ENCODE measurements at regions of chr3 and their contacts with region 1.

Region 1: GRCh38 chr3:33440323-33441232 is at the start of gene UBP1:
- DNase-seq: peak; percentile 100
- H3K4me3 ChIP-seq: peak within 1 kb of the TSS; percentile 82 to 95 (median 94)
- H3K4me3 Mint-ChIP-seq: peak within 1 kb of the TSS; percentile 99 to 100
- H3K27ac ChIP-seq: peak within 1 kb of the TSS; percentile 97 to 98
- H3K27ac Mint-ChIP-seq: peak within 1 kb of the TSS; percentile 97 to 100 (median 100)
- H3K4me1 ChIP-seq: peaks cover 34 to 41% of the 10 kb centered on the region in 2 donors
- H3K4me1 Mint-ChIP-seq: peaks cover 37% of the 10 kb centered on the region
- H3K27me3 ChIP-seq: no peaks in the 10 kb centered on the region
- H3K27me3 Mint-ChIP-seq: peaks cover 0 to 5% (median 0%) of the 10 kb centered on the region in 3 donors
- CTCF ChIP-seq: no peak
- polyA plus RNA-seq, gene UBP1: 7.8 to 72.4 (median 8.8) TPM

Region 2: DNA sequence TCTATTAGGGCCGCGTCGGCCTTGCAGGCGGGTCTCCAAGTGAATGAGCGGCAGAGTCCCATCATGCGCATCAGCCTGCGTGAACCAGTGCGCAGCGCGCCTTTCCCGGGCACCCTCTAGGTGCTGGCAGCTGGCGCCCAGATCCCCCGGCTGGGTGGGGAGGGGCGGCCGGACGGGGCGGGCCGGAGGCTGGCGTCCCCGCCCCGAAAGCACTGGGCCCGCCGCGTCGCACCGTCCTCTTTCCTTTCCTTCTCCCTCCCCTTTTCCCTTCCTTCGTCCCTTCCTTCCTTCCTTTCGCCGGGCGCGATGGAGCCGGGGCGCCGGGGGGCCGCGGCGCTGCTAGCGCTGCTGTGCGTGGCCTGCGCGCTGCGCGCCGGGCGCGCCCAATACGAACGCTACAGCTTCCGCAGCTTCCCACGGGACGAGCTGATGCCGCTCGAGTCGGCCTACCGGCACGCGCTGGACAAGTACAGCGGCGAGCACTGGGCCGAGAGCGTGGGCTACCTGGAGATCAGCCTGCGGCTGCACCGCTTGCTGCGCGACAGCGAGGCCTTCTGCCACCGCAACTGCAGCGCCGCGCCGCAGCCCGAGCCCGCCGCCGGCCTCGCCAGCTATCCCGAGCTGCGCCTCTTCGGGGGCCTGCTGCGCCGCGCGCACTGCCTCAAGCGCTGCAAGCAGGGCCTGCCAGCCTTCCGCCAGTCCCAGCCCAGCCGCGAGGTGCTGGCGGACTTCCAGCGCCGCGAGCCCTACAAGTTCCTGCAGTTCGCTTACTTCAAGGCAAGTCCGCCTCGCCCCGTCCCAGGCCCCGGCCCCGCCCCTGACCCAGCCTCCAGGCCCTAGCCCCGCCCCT is 326.6 kb before region 1 on chr3 and contains the start of gene CRTAP:
- intact Hi-C with region 1: loop called in 1 of 2 experiments (anchors 10 kb)
- DNase-seq: peak; percentile 85 to 90 (median 90)
- H3K4me3 ChIP-seq: peak within 1 kb of the TSS; percentile 60 to 89 (median 84)
- H3K4me3 Mint-ChIP-seq: peak within 1 kb of the TSS; percentile 80 to 90
- H3K27ac ChIP-seq: peak within 1 kb of the TSS; percentile 86 to 91
- H3K27ac Mint-ChIP-seq: peak within 1 kb of the TSS; percentile 88 to 98 (median 94)
- H3K4me1 ChIP-seq: peaks cover 54 to 69% of the 10 kb centered on the region in 2 donors
- H3K4me1 Mint-ChIP-seq: peaks cover 69% of the 10 kb centered on the region
- H3K27me3 ChIP-seq: no peaks in the 10 kb centered on the region
- H3K27me3 Mint-ChIP-seq: peaks cover 0 to 2% (median 0%) of the 10 kb centered on the region in 3 donors
- CTCF ChIP-seq: no peak
- polyA plus RNA-seq, gene CRTAP: 134 to 321 (median 317) TPM

Region 3: GRCh38 chr3:33401781-33402180 is 38.8 kb before region 1 on chr3:
- intact Hi-C with region 1: loop called in 1 of 2 experiments (anchors 5 kb)
- DNase-seq: no peak
- H3K4me3 ChIP-seq: no peak overlapping the region
- H3K4me3 Mint-ChIP-seq: no peak overlapping the region
- H3K27ac ChIP-seq: peak overlapping the region in 1 of 2 donors; percentile 66
- H3K27ac Mint-ChIP-seq: peak overlapping the region in 5 of 7 donors; percentile 45 to 74 (median 48)
- H3K4me1 ChIP-seq: peaks cover 9 to 17% of the 10 kb centered on the region in 2 donors
- H3K4me1 Mint-ChIP-seq: peaks cover 19% of the 10 kb centered on the region
- H3K27me3 ChIP-seq: no peaks in the 10 kb centered on the region
- H3K27me3 Mint-ChIP-seq: no peaks in the 10 kb centered on the region
- CTCF ChIP-seq: no peak

Region 4: DNA sequence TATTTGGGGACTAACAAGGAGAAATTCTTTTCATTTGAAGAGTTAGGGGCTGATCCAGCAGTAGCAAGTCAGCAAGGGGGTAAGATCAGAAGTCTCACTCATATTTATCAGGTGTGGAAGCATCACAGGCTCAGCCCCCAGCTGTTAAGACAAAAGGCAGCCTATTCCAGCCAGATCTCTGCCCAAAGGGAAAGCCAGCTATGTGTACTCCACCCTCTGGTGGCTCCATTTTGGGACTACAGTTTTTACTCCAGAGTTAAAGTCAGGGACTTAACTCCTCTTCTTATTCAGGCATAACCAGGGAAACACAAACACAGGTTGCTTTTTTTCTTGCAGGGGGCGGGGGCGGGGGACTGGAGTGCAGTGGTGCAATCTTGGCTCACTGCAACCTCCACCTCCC is 19.6 kb before region 1 on chr3:
- intact Hi-C with region 1: loop called in 1 of 2 experiments (anchors 2 kb)
- DNase-seq: peak in 1 of 3 donors; percentile 16
- H3K4me3 ChIP-seq: no peak overlapping the region
- H3K4me3 Mint-ChIP-seq: no peak overlapping the region
- H3K27ac ChIP-seq: peak overlapping the region; percentile 66 to 82
- H3K27ac Mint-ChIP-seq: peak overlapping the region; percentile 83 to 94 (median 94)
- H3K4me1 ChIP-seq: peaks cover 43 to 57% of the 10 kb centered on the region in 2 donors
- H3K4me1 Mint-ChIP-seq: peaks cover 51% of the 10 kb centered on the region
- H3K27me3 ChIP-seq: no peaks in the 10 kb centered on the region
- H3K27me3 Mint-ChIP-seq: no peaks in the 10 kb centered on the region
- CTCF ChIP-seq: no peak

Region 5: GRCh38 chr3:33787328-33788009 is 346.9 kb after region 1 on chr3:
- intact Hi-C with region 1: loop called (anchors 5 kb)
- DNase-seq: peak; percentile 56 to 70 (median 57)
- H3K4me3 ChIP-seq: no peak overlapping the region
- H3K4me3 Mint-ChIP-seq: peak overlapping the region; percentile 64 to 84
- H3K27ac ChIP-seq: no peak overlapping the region
- H3K27ac Mint-ChIP-seq: peak overlapping the region in 1 of 7 donors; percentile 50
- H3K4me1 ChIP-seq: peaks cover 13 to 20% of the 10 kb centered on the region in 2 donors
- H3K4me1 Mint-ChIP-seq: peaks cover 20% of the 10 kb centered on the region
- H3K27me3 ChIP-seq: no peaks in the 10 kb centered on the region
- H3K27me3 Mint-ChIP-seq: no peaks in the 10 kb centered on the region
- CTCF ChIP-seq: peak; percentile 81

Measured in CD14-positive monocyte (primary cell).